ENCODE measurements at regions of chr9 and their contacts with region 1.

Region 1: GRCh38 chr9:121213136-121213806 is 11.6 kb upstream of the RAB14 start:
- DNase-seq: peak; percentile 91 to 93 (median 93)
- ATAC-seq: peak; percentile 100
- H3K4me3 ChIP-seq: no peak overlapping the region
- H3K27ac ChIP-seq: peak overlapping the region in 3 of 4 donors; percentile 33 to 57 (median 39)
- H3K4me1 ChIP-seq: peaks cover 9% of the 10 kb centered on the region
- H3K27me3 ChIP-seq: no peaks in the 10 kb centered on the region
- CTCF ChIP-seq: peak; percentile 91 to 98 (median 95)
- POLR2A ChIP-seq: peak in 1 of 3 donors; percentile 15

Region 2: GRCh38 chr9:121267689-121268597 is 54.7 kb after region 1 on chr9 and contains the start of gene GSN:
- intact Hi-C with region 1: loop called (anchors 10 kb)
- DNase-seq: peak; percentile 78 to 86 (median 82)
- ATAC-seq: peak; percentile 92
- H3K4me3 ChIP-seq: peak within 1 kb of the TSS; percentile 32 to 33
- H3K27ac ChIP-seq: peak within 1 kb of the TSS; percentile 64 to 66 (median 64)
- H3K4me1 ChIP-seq: peaks cover 26% of the 10 kb centered on the region
- H3K27me3 ChIP-seq: no peaks in the 10 kb centered on the region
- CTCF ChIP-seq: peak in 3 of 7 experiments; percentile 15 to 30 (median 18)
- POLR2A ChIP-seq: peak; percentile 61 to 76 (median 70)
- total RNA-seq, gene GSN: 328 to 753 TPM

Region 3: GRCh38 chr9:121299467-121300234 is 86.4 kb after region 1 on chr9:
- intact Hi-C with region 1: no loop called
- DNase-seq: peak in 3 of 4 donors; percentile 28 to 57 (median 53)
- ATAC-seq: peak; percentile 58
- H3K4me3 ChIP-seq: no peak overlapping the region
- H3K27ac ChIP-seq: peak overlapping the region; percentile 13 to 63 (median 38)
- H3K4me1 ChIP-seq: peaks cover 13% of the 10 kb centered on the region
- H3K27me3 ChIP-seq: no peaks in the 10 kb centered on the region
- CTCF ChIP-seq: no peak
- POLR2A ChIP-seq: peak; percentile 6 to 24 (median 9)

Region 4: DNA sequence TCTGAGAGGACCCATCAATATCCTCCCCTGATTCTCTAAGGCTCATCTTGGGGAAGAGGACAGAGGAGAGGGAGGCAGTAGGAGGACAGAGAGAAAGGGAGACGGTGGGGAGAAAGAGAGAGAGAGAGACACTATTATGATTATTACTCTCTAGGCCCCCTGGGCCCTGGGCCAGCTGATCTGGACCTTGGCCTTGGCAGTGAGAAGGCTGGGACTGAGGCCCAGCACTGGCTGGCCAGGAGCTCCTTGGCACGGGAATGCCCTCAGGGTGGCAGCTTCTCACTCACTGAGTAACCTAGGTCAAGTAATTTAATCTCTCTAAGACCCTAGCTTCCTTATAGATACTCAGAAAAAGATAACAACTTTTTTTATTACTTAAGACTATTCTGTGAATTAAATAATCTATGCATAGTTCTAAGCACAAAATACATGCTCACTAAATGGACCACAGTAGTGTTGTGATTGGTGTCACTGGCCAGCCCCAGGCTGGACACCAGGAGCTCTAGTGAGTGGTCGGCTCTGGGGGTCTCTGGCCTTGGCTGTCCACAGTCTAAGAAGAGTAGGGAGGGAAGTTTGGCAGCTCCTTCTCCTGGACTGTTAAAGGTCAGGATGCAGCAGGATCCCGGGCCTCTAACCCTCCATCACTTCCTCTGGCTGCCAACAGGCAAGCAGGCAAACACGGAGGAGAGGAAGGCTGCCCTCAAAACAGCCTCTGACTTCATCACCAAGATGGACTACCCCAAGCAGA is 104.6 kb after region 1 on chr9:
- intact Hi-C with region 1: loop called (anchors 10 kb)
- DNase-seq: peak; percentile 78 to 90 (median 84)
- ATAC-seq: peak; percentile 57
- H3K4me3 ChIP-seq: no peak overlapping the region
- H3K27ac ChIP-seq: no peak overlapping the region
- H3K4me1 ChIP-seq: peaks cover 37% of the 10 kb centered on the region
- H3K27me3 ChIP-seq: no peaks in the 10 kb centered on the region
- CTCF ChIP-seq: peak in 1 of 7 experiments; percentile 24
- POLR2A ChIP-seq: no peak

Region 5: DNA sequence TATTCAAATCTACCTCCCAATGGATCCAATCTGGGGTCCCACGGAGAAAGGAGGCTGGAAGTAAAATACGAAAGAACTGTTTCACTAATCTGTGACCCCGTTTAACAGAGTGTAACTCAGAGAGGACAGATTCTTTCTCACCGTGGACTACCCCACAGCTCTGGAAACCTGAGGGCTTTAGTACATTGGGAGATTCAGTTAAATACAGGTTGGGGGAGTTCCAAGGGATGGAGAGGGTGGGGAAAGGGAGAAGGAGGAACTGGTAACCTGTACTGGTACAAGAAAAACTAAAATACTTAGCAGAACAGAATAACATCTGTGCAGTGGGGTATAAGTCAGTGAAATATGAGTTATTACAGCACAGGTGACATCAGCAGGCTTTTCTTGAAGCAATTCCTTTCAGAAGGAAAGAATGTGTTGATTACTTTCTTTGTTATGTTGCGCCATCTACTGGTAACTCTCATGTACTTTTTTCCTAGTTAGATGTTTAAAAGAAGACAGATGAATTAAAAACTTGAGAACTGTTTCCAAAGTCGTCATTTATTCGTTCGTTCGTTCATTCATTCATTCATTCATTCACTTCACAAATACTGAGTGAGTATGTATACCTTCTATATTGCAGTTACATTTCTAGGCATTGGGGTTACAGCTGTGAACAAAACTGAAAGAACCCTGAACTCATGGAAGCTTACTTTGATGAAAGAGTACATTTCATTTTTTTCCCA is 186.8 kb after region 1 on chr9:
- intact Hi-C with region 1: loop called (anchors 10 kb)
- DNase-seq: peak in 1 of 4 donors; percentile 13
- ATAC-seq: peak; percentile 91
- H3K4me3 ChIP-seq: no peak overlapping the region
- H3K27ac ChIP-seq: no peak overlapping the region
- H3K4me1 ChIP-seq: no peaks in the 10 kb centered on the region
- H3K27me3 ChIP-seq: no peaks in the 10 kb centered on the region
- CTCF ChIP-seq: peak; percentile 39 to 88 (median 71)
- POLR2A ChIP-seq: no peak